ENCODE measurements at regions of chr3 and their contacts with region 1.

Region 1: DNA sequence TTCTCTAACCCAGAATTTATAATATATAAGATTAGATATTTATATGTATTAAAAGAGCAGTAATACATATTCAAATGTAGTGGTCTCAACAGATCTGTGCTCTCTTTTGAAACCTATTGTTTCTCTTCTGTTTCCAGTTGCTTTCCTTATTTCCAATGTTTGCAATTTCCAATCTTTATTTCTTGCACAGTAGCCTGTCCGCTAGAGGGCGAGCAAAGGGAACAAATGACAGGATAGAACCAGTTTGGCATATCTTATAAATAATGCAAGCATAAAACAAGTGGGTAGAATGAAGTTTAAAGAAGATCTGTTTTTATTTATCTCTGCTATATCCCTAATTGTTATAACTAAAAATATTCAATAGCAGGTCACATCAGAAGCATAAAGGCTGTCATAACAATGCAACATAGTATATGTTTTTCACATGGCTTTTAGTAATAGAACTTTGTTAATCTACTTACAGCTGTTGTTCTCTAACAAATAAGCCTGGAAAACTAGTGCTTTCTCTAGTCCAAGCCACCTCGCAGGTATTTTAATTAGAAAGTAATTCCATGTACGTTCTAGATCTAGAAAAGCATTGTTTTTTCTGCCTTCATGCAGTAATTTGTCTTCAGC is 15.1 kb upstream of the TCAIM start:
- DNase-seq: peak; percentile 73
- H3K4me3 Mint-ChIP-seq: no peak overlapping the region
- H3K27ac Mint-ChIP-seq: no peak overlapping the region
- H3K4me1 Mint-ChIP-seq: no peaks in the 10 kb centered on the region
- H3K27me3 Mint-ChIP-seq: no peaks in the 10 kb centered on the region
- CTCF ChIP-seq: peak; percentile 70

Region 2: GRCh38 chr3:44099566-44100297 is 223.7 kb before region 1 on chr3:
- CTCF ChIA-PET with region 1: no interaction called
- POLR2A ChIA-PET with region 1: no interaction called
- intact Hi-C with region 1: no loop called
- DNase-seq: no peak
- H3K4me3 Mint-ChIP-seq: no peak overlapping the region
- H3K27ac Mint-ChIP-seq: no peak overlapping the region
- H3K4me1 Mint-ChIP-seq: peaks cover 8% of the 10 kb centered on the region
- H3K27me3 Mint-ChIP-seq: no peaks in the 10 kb centered on the region
- CTCF ChIP-seq: no peak

Region 3: DNA sequence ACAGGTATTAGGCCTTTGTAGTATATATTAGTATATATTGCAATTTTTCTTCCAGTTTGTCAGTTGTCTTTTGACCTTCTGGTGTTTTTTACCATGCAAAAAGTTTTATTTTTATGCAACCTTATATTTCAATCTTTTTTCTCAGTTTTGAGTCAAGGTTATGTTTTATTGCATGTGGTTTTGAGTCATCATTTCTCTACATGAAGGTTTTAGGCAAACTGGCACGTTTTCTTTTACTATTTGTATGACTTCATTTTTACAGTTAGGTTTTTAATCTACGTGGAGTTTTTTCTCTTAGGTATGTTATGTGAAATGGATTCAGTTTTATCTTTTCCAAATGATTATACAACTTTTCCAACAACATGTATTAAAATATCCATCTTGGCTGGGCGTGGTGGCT is 21.7 kb before region 1 on chr3:
- CTCF ChIA-PET with region 1: no interaction called
- POLR2A ChIA-PET with region 1: no interaction called
- intact Hi-C with region 1: no loop called
- DNase-seq: no peak
- H3K4me3 Mint-ChIP-seq: no peak overlapping the region
- H3K27ac Mint-ChIP-seq: no peak overlapping the region
- H3K4me1 Mint-ChIP-seq: no peaks in the 10 kb centered on the region
- H3K27me3 Mint-ChIP-seq: no peaks in the 10 kb centered on the region
- CTCF ChIP-seq: no peak

Region 4: GRCh38 chr3:44477312-44478030 is 154.0 kb after region 1 on chr3 and contains the start of gene ZNF445:
- CTCF ChIA-PET with region 1: interaction called, 4 read pairs
- POLR2A ChIA-PET with region 1: no interaction called
- intact Hi-C with region 1: loop called (anchors 2 kb)
- DNase-seq: peak; percentile 75
- H3K4me3 Mint-ChIP-seq: peak within 1 kb of the TSS; percentile 88
- H3K27ac Mint-ChIP-seq: peak within 1 kb of the TSS; percentile 85
- H3K4me1 Mint-ChIP-seq: peaks cover 19% of the 10 kb centered on the region
- H3K27me3 Mint-ChIP-seq: no peaks in the 10 kb centered on the region
- CTCF ChIP-seq: no peak
- total RNA-seq, gene ZNF445: 10.1 and 11.0 TPM in 2 replicates

Region 5: DNA sequence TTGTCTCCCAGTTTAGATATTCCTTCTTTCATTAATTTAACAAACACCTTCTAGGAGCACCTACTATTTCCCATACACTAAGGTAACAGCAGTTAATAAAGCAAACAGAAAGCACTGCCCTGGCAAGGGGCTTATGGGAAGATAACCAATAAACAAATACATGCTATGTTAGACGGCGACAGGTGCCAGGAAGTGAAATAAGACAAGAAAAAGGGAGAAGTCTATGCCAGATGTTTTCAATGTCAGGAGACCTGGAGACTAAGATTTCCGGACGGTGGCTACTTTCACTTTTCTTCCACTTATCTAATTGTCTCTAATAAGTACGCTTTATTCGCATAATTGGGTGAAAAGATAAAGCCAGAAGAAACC is 186.5 kb after region 1 on chr3:
- CTCF ChIA-PET with region 1: no interaction called
- POLR2A ChIA-PET with region 1: no interaction called
- intact Hi-C with region 1: loop called (anchors 5 kb)
- DNase-seq: peak; percentile 20
- H3K4me3 Mint-ChIP-seq: peak overlapping the region; percentile 94
- H3K27ac Mint-ChIP-seq: peak overlapping the region; percentile 94
- H3K4me1 Mint-ChIP-seq: peaks cover 10% of the 10 kb centered on the region
- H3K27me3 Mint-ChIP-seq: no peaks in the 10 kb centered on the region
- CTCF ChIP-seq: no peak

Region 6: GRCh38 chr3:44529927-44530326 is 206.5 kb after region 1 on chr3:
- CTCF ChIA-PET with region 1: no interaction called
- POLR2A ChIA-PET with region 1: interaction called, 4 read pairs
- intact Hi-C with region 1: loop called (anchors 2 kb)
- DNase-seq: peak; percentile 3
- H3K4me3 Mint-ChIP-seq: no peak overlapping the region
- H3K27ac Mint-ChIP-seq: no peak overlapping the region
- H3K4me1 Mint-ChIP-seq: no peaks in the 10 kb centered on the region
- H3K27me3 Mint-ChIP-seq: peaks cover 37% of the 10 kb centered on the region
- CTCF ChIP-seq: no peak

Region 7: GRCh38 chr3:44642337-44642736 is 318.9 kb after region 1 on chr3:
- CTCF ChIA-PET with region 1: interaction called, 3 read pairs
- POLR2A ChIA-PET with region 1: no interaction called
- intact Hi-C with region 1: loop called (anchors 1 kb)
- DNase-seq: no peak
- H3K4me3 Mint-ChIP-seq: no peak overlapping the region
- H3K27ac Mint-ChIP-seq: no peak overlapping the region
- H3K4me1 Mint-ChIP-seq: no peaks in the 10 kb centered on the region
- H3K27me3 Mint-ChIP-seq: no peaks in the 10 kb centered on the region
- CTCF ChIP-seq: no peak

Region 8: GRCh38 chr3:44648564-44649229 is 325.2 kb after region 1 on chr3 and contains the start of gene ZNF35:
- CTCF ChIA-PET with region 1: interaction called, 4 read pairs
- POLR2A ChIA-PET with region 1: interaction called, 3 read pairs
- intact Hi-C with region 1: loop called (anchors 1 kb)
- DNase-seq: peak; percentile 89
- H3K4me3 Mint-ChIP-seq: peak within 1 kb of the TSS; percentile 91
- H3K27ac Mint-ChIP-seq: peak within 1 kb of the TSS; percentile 87
- H3K4me1 Mint-ChIP-seq: peaks cover 10% of the 10 kb centered on the region
- H3K27me3 Mint-ChIP-seq: no peaks in the 10 kb centered on the region
- CTCF ChIP-seq: no peak
- total RNA-seq, gene ZNF35: 9.9 and 12.7 TPM in 2 replicates

Measured in MCF 10A (cell line).